Testis (tissue), 5 donors: ENCODE measurements at regions of chr4 and their contacts with region 1.

Region 1: GRCh38 chr4:73653695-73654106 is 33.5 kb upstream of the RASSF6 start:
- DNase-seq: peak; percentile 30
- H3K4me3 ChIP-seq: no peak overlapping the region
- H3K27ac ChIP-seq: no peak overlapping the region
- H3K4me1 ChIP-seq: no peaks in the 10 kb centered on the region
- H3K27me3 ChIP-seq: no peaks in the 10 kb centered on the region
- CTCF ChIP-seq: peak in 2 of 3 experiments; percentile 49 to 61
- POLR2A ChIP-seq: no peak

Region 2: GRCh38 chr4:73006286-73006990 is 647.3 kb before region 1 on chr4:
- intact Hi-C with region 1: no loop called
- DNase-seq: no peak
- H3K4me3 ChIP-seq: no peak overlapping the region
- H3K27ac ChIP-seq: no peak overlapping the region
- H3K4me1 ChIP-seq: no peaks in the 10 kb centered on the region
- H3K27me3 ChIP-seq: no peaks in the 10 kb centered on the region
- CTCF ChIP-seq: no peak
- POLR2A ChIP-seq: no peak

Region 3: GRCh38 chr4:74133786-74134499 is 480.2 kb after region 1 on chr4:
- intact Hi-C with region 1: loop called (anchors 10 kb)
- DNase-seq: peak; percentile 82
- H3K4me3 ChIP-seq: no peak overlapping the region
- H3K27ac ChIP-seq: no peak overlapping the region
- H3K4me1 ChIP-seq: no peaks in the 10 kb centered on the region
- H3K27me3 ChIP-seq: no peaks in the 10 kb centered on the region
- CTCF ChIP-seq: peak in 2 of 3 experiments; percentile 55 to 64
- POLR2A ChIP-seq: no peak